ENCODE measurements at regions of chr16 and their contacts with region 1.

Region 1: GRCh38 chr16:56370877-56371659 is 54.3 kb downstream of the AMFR start:
- DNase-seq: peak; percentile 36
- H3K4me3 Mint-ChIP-seq: no peak overlapping the region
- H3K27ac Mint-ChIP-seq: no peak overlapping the region
- H3K4me1 Mint-ChIP-seq: peaks cover 38% of the 10 kb centered on the region
- H3K27me3 Mint-ChIP-seq: no peaks in the 10 kb centered on the region
- CTCF ChIP-seq: no peak

Region 2: DNA sequence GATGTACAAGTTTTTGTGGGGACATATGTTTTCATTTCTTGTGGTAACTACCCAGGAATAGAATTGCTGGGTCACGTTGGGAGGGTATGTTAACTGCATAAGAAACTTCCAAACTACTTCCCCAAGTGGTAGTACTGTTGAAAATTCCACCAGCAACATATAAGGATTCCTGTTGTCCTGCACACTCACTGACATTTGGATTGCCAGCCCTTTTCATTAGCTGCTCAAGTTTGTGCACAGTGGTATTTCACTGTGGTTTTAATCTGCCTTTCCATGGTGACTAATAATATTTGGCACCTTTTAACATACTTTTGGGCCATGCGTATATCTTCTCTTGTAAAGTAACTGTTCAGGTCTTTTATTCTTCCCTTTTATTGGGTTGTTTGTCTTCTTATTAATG is 76.5 kb before region 1 on chr16:
- CTCF ChIA-PET with region 1: no interaction called
- intact Hi-C with region 1: no loop called
- DNase-seq: no peak
- H3K4me3 Mint-ChIP-seq: no peak overlapping the region
- H3K27ac Mint-ChIP-seq: no peak overlapping the region
- H3K4me1 Mint-ChIP-seq: peaks cover 27% of the 10 kb centered on the region
- H3K27me3 Mint-ChIP-seq: peaks cover 38% of the 10 kb centered on the region
- CTCF ChIP-seq: no peak

Region 3: GRCh38 chr16:56424791-56425438 is 53.8 kb after region 1 on chr16:
- CTCF ChIA-PET with region 1: no interaction called
- intact Hi-C with region 1: loop called (anchors 5 kb)
- DNase-seq: peak; percentile 40
- H3K4me3 Mint-ChIP-seq: peak overlapping the region; percentile 94
- H3K27ac Mint-ChIP-seq: peak overlapping the region; percentile 87
- H3K4me1 Mint-ChIP-seq: peaks cover 44% of the 10 kb centered on the region
- H3K27me3 Mint-ChIP-seq: no peaks in the 10 kb centered on the region
- CTCF ChIP-seq: no peak

Measured in Calu3 (cell line).